ENCODE measurements at regions of chr1 and their contacts with region 1.

Region 1: GRCh38 chr1:232578651-232579195 is 51.2 kb downstream of the SIPA1L2 start:
- DNase-seq: no peak
- H3K4me3 Mint-ChIP-seq: no peak overlapping the region
- H3K27ac Mint-ChIP-seq: no peak overlapping the region
- H3K4me1 Mint-ChIP-seq: peaks cover 30% of the 10 kb centered on the region
- H3K27me3 Mint-ChIP-seq: no peaks in the 10 kb centered on the region
- CTCF ChIP-seq: no peak

Region 2: DNA sequence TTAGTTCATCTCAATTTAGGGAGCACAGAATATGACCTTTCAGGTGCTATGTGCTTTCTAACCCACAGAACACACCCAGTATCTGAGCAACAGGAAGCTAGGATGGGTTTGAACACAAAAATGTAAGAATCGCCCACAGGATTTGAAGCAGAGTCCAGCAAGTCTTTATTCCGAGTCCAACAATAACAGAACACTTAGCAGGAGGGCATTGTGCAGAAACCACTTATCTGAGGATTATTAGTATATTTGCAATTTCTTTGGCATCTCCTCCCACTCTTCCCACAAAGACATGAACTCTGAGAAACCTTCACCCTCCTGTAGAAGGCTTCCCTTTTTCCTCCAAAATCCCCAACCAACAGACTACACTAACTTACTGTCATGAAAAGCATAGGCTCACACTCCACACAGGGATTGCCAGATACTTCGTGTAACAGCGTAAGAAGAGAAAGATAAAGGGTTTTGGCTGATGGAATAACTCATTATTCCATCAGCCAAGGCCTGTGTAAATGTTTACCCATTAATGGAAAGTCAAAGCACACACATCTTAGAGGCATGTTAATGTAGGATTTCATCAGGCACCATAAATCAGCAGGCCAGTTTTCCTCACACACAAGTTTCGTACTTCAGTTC is 35.1 kb after region 1 on chr1:
- CTCF ChIA-PET with region 1: interaction called, 3 read pairs
- POLR2A ChIA-PET with region 1: no interaction called
- intact Hi-C with region 1: loop called (anchors 5 kb)
- DNase-seq: peak; percentile 97
- H3K4me3 Mint-ChIP-seq: no peak overlapping the region
- H3K27ac Mint-ChIP-seq: peak overlapping the region; percentile 15
- H3K4me1 Mint-ChIP-seq: peaks cover 31% of the 10 kb centered on the region
- H3K27me3 Mint-ChIP-seq: no peaks in the 10 kb centered on the region
- CTCF ChIP-seq: no peak

Region 3: DNA sequence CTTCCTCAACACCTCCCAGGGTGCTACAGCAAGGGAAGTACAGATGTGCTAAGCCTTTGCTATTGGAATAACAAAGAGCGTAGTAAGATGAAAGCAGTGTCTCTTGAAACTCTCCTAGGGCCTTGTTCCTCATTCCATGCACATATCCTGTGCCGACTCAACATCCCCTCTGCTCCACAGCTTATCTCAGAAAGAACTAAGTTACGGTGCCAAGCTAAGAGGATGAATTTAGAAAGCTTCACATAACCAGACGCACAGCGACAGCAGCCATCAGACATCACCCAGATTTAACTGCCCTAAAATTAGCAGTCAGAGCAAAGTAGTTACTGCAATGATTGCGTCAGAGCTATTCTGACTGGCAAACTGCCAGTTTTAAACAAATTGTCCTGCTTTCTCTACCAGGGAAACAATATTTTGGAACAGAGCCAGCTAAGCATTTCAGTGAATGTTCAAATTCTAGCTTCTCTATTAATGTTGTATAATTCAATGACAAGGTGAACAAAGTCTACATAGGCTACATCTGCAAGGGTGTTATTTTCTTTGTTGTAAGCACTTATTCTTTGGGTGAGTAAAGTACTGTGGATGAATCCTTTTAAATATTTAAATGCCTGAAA is 41.7 kb after region 1 on chr1:
- CTCF ChIA-PET with region 1: interaction called, 3 read pairs
- POLR2A ChIA-PET with region 1: interaction called, 6 read pairs
- intact Hi-C with region 1: loop called (anchors 2 kb)
- DNase-seq: peak; percentile 98
- H3K4me3 Mint-ChIP-seq: peak overlapping the region; percentile 10
- H3K27ac Mint-ChIP-seq: peak overlapping the region; percentile 17
- H3K4me1 Mint-ChIP-seq: peaks cover 34% of the 10 kb centered on the region
- H3K27me3 Mint-ChIP-seq: no peaks in the 10 kb centered on the region
- CTCF ChIP-seq: no peak